Activated T-helper 1 cell treated with anti-CD3 and anti-CD28 coated beads, Interleukin-12 subunit alpha, Interleukin-12 subunit beta, Interleukin-2, Interleukin-4 antibody, amounts not matched to agents 30 ng/mL and 10 ng/mL and 1 ng/mL, durations not matched to agents 14 hours and 24 hours and 36 hours (primary cell): ENCODE measurements at regions of chr20 and their contacts with region 1.

Region 1: GRCh38 chr20:51385646-51386530 is 156.6 kb downstream of the NFATC2 start:
- DNase-seq: no peak
- H3K4me3 Mint-ChIP-seq: peak overlapping the region; percentile 50
- H3K27ac Mint-ChIP-seq: no peak overlapping the region
- H3K4me1 Mint-ChIP-seq: peaks cover 78% of the 10 kb centered on the region
- H3K27me3 Mint-ChIP-seq: no peaks in the 10 kb centered on the region

Region 2: GRCh38 chr20:51249215-51249614 is 136.7 kb before region 1 on chr20:
- intact Hi-C with region 1: no loop called
- DNase-seq: no peak
- H3K4me3 Mint-ChIP-seq: no peak overlapping the region
- H3K27ac Mint-ChIP-seq: no peak overlapping the region
- H3K4me1 Mint-ChIP-seq: no peaks in the 10 kb centered on the region
- H3K27me3 Mint-ChIP-seq: peaks cover 10% of the 10 kb centered on the region

Region 3: GRCh38 chr20:51423290-51423667 is 37.4 kb after region 1 on chr20:
- intact Hi-C with region 1: loop called (anchors 1 kb)
- DNase-seq: no peak
- H3K4me3 Mint-ChIP-seq: peak overlapping the region; percentile 22
- H3K27ac Mint-ChIP-seq: peak overlapping the region; percentile 72
- H3K4me1 Mint-ChIP-seq: peaks cover 77% of the 10 kb centered on the region
- H3K27me3 Mint-ChIP-seq: no peaks in the 10 kb centered on the region

Region 4: GRCh38 chr20:51434580-51435247 is 48.8 kb after region 1 on chr20:
- intact Hi-C with region 1: loop called (anchors 5 kb)
- DNase-seq: no peak
- H3K4me3 Mint-ChIP-seq: no peak overlapping the region
- H3K27ac Mint-ChIP-seq: peak overlapping the region; percentile 12
- H3K4me1 Mint-ChIP-seq: peaks cover 63% of the 10 kb centered on the region
- H3K27me3 Mint-ChIP-seq: no peaks in the 10 kb centered on the region

Region 5: DNA sequence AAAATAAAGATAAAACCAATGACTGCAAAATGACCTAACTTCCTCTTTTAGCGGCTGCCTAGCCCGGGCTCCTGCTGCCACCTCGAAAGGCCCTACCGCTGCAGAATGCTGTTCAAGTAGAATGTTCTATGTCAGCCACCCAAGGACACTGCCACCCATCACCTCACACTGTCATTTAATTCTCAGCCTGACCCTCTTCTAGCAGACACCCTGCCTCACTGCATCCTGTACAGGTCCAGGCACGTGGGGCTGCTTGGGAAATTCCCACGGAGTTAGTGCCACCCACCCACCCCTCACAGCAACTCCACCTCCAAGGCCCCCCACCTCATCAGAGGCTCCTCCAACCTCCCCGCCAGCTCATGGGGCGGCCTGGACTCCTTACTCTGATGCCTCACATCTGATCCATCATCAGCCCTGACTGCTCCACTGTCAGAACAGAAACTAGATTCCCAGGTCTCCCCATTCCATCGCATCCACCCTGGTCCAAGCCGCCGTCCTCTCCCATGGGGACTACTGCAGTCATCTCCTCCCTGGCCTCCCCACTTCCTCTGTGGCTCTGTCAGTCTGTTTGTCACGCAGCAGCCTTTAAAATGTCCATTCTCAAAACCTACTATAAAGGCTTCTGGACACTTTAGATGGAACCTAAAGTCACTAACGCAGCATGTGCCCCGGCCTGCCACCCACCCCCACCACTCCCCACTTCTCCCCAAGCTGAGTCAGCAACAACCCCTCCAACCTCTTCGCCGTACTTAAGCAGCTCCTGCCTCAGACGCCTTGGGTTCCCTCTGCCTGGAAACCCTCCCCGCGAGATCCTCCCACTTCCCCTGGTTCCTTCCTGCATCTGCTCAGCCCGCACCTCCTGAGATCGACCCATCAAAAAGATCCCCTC is 139.6 kb after region 1 on chr20:
- intact Hi-C with region 1: loop called (anchors 5 kb)
- DNase-seq: no peak
- H3K4me3 Mint-ChIP-seq: peak overlapping the region; percentile 72
- H3K27ac Mint-ChIP-seq: peak overlapping the region; percentile 96
- H3K4me1 Mint-ChIP-seq: peaks cover 80% of the 10 kb centered on the region
- H3K27me3 Mint-ChIP-seq: no peaks in the 10 kb centered on the region

Region 6: DNA sequence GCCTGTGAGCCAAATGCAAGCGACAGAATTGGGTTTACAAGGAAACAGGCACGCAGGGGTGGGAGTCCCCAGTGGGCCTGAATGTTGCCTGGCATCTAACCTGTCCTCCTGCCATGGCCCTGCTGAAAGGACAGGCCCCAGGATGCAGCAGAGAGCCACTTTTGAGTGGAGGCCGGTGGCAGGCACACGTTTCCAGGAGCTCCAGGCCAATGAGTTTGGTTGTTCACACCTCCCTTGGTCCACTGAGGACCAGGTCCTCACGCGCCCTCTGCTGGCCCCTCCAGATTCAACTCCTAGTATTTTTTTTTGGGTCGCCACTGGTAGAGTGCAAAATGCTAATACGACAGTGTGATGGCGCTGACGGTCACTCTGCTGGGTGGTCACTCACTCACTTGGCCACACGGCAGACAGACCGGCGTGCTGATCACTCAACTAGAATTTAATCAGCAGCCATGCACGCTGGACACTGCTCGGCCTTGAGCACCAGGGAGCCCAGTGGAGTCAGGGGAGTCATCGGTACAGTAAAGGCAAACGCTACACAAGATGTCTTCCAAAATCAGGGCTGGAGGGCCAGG is 238.4 kb after region 1 on chr20:
- intact Hi-C with region 1: loop called (anchors 5 kb)
- DNase-seq: peak; percentile 31
- H3K4me3 Mint-ChIP-seq: no peak overlapping the region
- H3K27ac Mint-ChIP-seq: no peak overlapping the region
- H3K4me1 Mint-ChIP-seq: peaks cover 19% of the 10 kb centered on the region
- H3K27me3 Mint-ChIP-seq: peaks cover 2% of the 10 kb centered on the region